ENCODE measurements at regions of chr14 and their contacts with region 1.

Region 1: DNA sequence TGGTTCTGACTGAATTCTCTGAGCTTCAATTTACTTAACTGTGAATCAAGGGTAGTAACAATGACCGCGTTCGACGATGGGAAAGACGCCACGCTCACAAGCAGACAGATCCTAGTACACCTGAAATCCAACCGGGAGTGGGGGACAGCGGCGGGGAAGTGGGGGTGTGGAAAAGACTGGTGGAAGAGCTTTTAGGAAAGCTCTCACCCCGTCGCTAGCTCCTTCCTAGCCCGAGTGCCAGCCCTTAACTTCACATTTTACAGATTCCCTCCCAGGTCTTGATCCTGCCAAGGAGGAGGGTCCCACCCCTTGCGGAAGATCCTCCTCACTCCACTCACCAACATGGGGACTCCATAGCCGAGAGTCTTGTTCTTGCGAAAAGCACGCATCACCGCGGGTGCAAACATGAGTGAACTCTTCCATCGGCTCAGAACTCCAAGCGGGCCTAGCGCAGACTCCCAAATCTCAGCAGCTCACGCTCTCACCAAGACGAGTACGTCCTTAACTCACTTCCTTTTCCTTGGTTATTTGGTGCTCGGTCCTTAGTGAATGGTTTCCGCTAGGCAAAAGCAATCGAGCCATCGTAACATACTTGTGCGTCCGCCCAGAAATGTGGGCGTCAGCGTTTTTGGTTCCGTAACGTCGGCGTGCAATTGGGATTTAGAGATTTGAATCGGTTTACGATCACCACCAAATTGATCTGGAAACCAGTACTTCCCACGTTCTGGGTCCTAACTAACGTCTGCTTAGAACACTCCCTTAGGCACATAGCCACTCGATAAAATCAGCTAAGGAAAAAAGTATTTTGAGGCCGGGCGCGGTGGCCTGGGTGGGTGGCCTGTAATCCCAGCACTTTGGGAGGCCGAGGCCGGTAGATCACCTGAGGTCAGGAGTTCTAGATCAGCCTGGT is at the start of gene COX16:
- DNase-seq: peak; percentile 84
- ATAC-seq: peak; percentile 99
- H3K4me3 ChIP-seq: peak within 1 kb of the TSS; percentile 66 to 95
- H3K27ac ChIP-seq: peak within 1 kb of the TSS; percentile 94
- H3K4me1 ChIP-seq: no peaks in the 10 kb centered on the region; the same call in 1 of the 2 replicates
- H3K27me3 ChIP-seq: no peaks in the 10 kb centered on the region
- CTCF ChIP-seq: no peak
- total RNA-seq, gene COX16: 33.2 TPM

Region 2: DNA sequence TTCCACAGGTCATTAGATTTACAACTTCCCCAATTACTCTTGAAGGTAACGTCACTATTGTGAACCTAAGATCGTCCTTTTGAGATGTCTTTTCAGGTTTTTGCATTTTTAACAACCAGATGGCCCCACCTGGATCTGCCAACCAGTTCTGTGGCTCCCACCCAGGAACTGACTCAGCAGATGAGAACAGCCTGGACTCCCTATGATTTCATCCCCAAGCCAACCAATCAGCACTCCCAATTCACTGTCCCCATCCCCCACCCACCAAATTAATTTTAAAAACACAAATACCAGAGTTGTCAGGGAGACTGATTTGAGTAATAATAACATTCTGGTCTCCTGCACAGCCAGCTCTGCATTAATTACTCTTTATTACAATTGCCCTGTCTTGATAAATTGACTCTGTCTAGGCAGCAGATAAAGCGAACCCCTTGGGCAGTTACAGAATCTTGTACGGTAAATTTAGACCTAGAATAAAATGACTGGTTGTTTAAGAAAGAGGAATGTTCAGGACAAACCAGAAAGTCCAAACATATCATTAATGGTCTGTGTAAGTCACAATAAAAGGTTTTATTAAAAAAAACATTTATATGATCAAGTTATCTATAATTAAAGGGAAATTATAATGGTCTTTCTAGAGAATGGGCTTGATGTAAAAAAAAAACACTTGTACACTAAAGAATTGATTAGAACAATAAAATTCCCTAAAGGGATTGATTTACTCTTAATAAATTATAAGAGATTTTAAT is 55.7 kb before region 1 on chr14:
- CTCF ChIA-PET with region 1: no interaction called
- POLR2A ChIA-PET with region 1: no interaction called
- in situ Hi-C with region 1: no loop called
- intact Hi-C with region 1: no loop called
- DNase-seq: no peak
- ATAC-seq: no peak
- H3K4me3 ChIP-seq: no peak overlapping the region
- H3K27ac ChIP-seq: no peak overlapping the region
- H3K4me1 ChIP-seq: no peaks in the 10 kb centered on the region
- H3K27me3 ChIP-seq: no peaks in the 10 kb centered on the region
- CTCF ChIP-seq: no peak

Region 3: DNA sequence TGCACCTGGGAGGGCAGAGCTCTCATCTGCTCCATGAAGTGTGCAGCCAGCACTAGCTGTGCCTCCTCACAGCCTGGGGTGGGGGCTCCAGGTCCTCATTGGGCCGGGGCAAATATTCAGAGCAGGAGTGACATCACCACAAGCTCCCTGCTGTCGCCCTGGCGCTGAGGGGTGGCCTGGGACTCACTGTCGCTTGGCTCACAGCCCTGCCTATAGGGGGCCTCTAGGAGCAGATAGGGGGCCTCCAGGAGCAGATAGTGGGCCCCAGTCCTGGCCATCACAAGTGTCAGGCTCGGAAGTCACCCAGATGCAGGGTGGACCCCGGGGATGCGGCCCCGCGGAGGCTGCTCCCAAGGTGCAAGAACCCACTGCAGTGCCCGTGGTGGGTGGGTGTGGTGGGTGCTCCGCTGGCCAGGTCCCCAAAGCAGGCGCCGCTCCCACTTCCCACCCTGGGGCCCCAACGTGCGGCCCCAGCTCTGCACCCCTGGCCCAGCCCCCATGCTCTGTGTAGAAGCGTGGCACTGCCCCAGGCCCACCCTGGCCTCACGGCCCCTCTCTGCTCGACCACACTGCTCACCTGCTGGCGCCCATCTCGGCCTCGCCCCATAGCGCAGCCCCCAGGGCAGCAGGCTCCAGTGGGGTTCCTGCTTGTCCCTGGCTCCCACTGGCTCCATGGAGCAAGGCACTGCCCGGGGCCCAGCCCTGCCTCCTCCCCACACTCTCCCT is 39.4 kb after region 1 on chr14:
- CTCF ChIA-PET with region 1: no interaction called
- POLR2A ChIA-PET with region 1: no interaction called
- in situ Hi-C with region 1: no loop called
- intact Hi-C with region 1: no loop called
- DNase-seq: no peak
- ATAC-seq: no peak
- H3K4me3 ChIP-seq: no peak overlapping the region
- H3K27ac ChIP-seq: no peak overlapping the region
- H3K4me1 ChIP-seq: no peaks in the 10 kb centered on the region
- H3K27me3 ChIP-seq: no peaks in the 10 kb centered on the region
- CTCF ChIP-seq: no peak

Region 4: GRCh38 chr14:70809543-70810244 is 450.3 kb after region 1 on chr14:
- CTCF ChIA-PET with region 1: interaction called, 12 read pairs
- POLR2A ChIA-PET with region 1: no interaction called
- in situ Hi-C with region 1: no loop called
- intact Hi-C with region 1: no loop called
- DNase-seq: peak; percentile 74
- ATAC-seq: peak; percentile 95
- H3K4me3 ChIP-seq: peak overlapping the region; percentile 83 to 89
- H3K27ac ChIP-seq: peak overlapping the region; percentile 84
- H3K4me1 ChIP-seq: peaks cover 15% of the 10 kb centered on the region
- H3K27me3 ChIP-seq: no peaks in the 10 kb centered on the region
- CTCF ChIP-seq: no peak

Measured in Panc1 (cell line).